HCT116 (cell line): ENCODE measurements at regions of chr14 and their contacts with region 1.

Region 1: GRCh38 chr14:89954070-89955028 is at the start of gene EFCAB11:
- DNase-seq: peak; percentile 97
- ATAC-seq: peak; percentile 85
- H3K4me3 ChIP-seq: peak within 1 kb of the TSS; percentile 76 to 88
- H3K27ac ChIP-seq: peak within 1 kb of the TSS; percentile 82
- H3K4me1 ChIP-seq: peaks cover 14 to 21% of the 10 kb centered on the region in 2 experiments; a peak in 3 of 4 replicates
- H3K27me3 ChIP-seq: no peaks in the 10 kb centered on the region
- CTCF ChIP-seq: peak in 2 of 3 experiments; percentile 17 to 45; a peak in 1 of 6 replicates
- POLR2A ChIP-seq: peak; percentile 59
- RAD21 ChIP-seq: peak; percentile 36
- total RNA-seq, gene EFCAB11: 18.1 TPM

Region 2: GRCh38 chr14:89425931-89426330 is 528.4 kb before region 1 on chr14:
- CTCF ChIA-PET with region 1: no interaction called
- POLR2A ChIA-PET with region 1: no interaction called
- RAD21 ChIA-PET with region 1: no interaction called
- intact Hi-C with region 1: loop called (anchors 10 kb)
- DNase-seq: peak; percentile 48
- ATAC-seq: peak; percentile 86
- H3K4me3 ChIP-seq: 0 out of 4 replicates have a peak overlapping the region, but pooled peaks of 1 of the 2 experiments have one; percentile 2
- H3K27ac ChIP-seq: no peak overlapping the region
- H3K4me1 ChIP-seq: peaks cover 19 to 33% of the 10 kb centered on the region in 2 experiments
- H3K27me3 ChIP-seq: 0 out of 2 replicates have a peak, but pooled peaks cover 5% of the 10 kb centered on the region
- CTCF ChIP-seq: no peak
- POLR2A ChIP-seq: no peak
- RAD21 ChIP-seq: no peak

Region 3: GRCh38 chr14:89936658-89937185 is 17.6 kb before region 1 on chr14:
- CTCF ChIA-PET with region 1: interaction called, 58 read pairs
- POLR2A ChIA-PET with region 1: interaction called, 13 read pairs
- RAD21 ChIA-PET with region 1: no interaction called
- intact Hi-C with region 1: no loop called
- DNase-seq: no peak
- ATAC-seq: no peak
- H3K4me3 ChIP-seq: no peak overlapping the region
- H3K27ac ChIP-seq: no peak overlapping the region
- H3K4me1 ChIP-seq: 0 out of 4 replicates have a peak, but pooled peaks cover 0 to 3% of the 10 kb centered on the region in 2 experiments
- H3K27me3 ChIP-seq: no peaks in the 10 kb centered on the region
- CTCF ChIP-seq: peak in 1 of 3 experiments; percentile 13; a peak in 1 of 6 replicates
- POLR2A ChIP-seq: no peak
- RAD21 ChIP-seq: no peak; the same call in 1 of the 2 replicates

Region 4: DNA sequence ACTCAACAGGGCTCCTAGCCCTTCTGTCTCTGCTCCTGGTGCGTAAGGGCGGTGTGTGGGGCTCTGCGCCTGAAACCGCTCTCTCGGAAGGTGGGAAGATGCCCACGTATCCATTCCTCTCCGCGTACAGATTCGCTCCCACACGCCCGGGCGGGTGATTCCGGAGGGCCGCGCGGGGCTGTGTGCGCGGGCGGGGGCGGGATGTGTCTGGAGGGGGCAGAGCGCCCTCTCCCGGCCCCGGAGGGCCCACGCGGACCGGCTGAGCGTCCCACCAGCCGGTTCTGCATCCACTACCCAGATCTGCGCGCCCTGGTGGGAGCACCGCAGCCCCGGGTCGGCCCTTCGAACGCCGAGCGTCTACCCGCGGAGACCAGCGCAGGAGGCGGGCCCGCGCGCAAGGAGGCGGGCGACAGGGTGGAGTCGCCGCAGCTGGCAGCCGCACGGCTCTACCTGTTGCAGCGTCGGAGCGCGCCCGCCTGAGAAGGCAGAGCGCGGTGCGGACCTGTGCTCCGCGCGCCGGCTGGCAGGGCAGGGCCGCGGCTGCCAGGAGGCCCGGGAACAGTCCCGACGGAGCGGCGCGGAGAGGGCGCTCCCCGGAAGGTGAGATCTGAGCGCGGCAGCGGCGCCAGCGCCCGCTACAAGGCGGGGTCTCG is 106.1 kb after region 1 on chr14:
- CTCF ChIA-PET with region 1: interaction called, 3 read pairs
- POLR2A ChIA-PET with region 1: no interaction called
- RAD21 ChIA-PET with region 1: no interaction called
- intact Hi-C with region 1: loop called (anchors 5 kb)
- DNase-seq: peak; percentile 59
- ATAC-seq: peak; percentile 96
- H3K4me3 ChIP-seq: peak overlapping the region; percentile 49 to 73
- H3K27ac ChIP-seq: peak overlapping the region; percentile 36
- H3K4me1 ChIP-seq: peaks cover 0 to 16% of the 10 kb centered on the region in 2 experiments; a peak in 2 of 4 replicates
- H3K27me3 ChIP-seq: no peaks in the 10 kb centered on the region
- CTCF ChIP-seq: peak; percentile 61 to 73 (median 62)
- POLR2A ChIP-seq: peak; percentile 43
- RAD21 ChIP-seq: peak; percentile 76